Left ventricle myocardium inferior (tissue), 1 donor: ENCODE measurements at regions of chr12 and their contacts with region 1.

Region 1: GRCh38 chr12:71642264-71642663 is 21.4 kb downstream of the ZFC3H1 start:
- DNase-seq: no peak
- H3K4me3 ChIP-seq: no peak overlapping the region
- H3K27ac ChIP-seq: no peak overlapping the region
- H3K4me1 ChIP-seq: peaks cover 16% of the 10 kb centered on the region
- H3K27me3 ChIP-seq: no peaks in the 10 kb centered on the region
- CTCF ChIP-seq: no peak

Region 2: GRCh38 chr12:71109834-71110233 is 532.4 kb before region 1 on chr12:
- intact Hi-C with region 1: no loop called
- DNase-seq: no peak
- H3K4me3 ChIP-seq: no peak overlapping the region
- H3K27ac ChIP-seq: no peak overlapping the region
- H3K4me1 ChIP-seq: peaks cover 3% of the 10 kb centered on the region
- H3K27me3 ChIP-seq: no peaks in the 10 kb centered on the region
- CTCF ChIP-seq: no peak

Region 3: DNA sequence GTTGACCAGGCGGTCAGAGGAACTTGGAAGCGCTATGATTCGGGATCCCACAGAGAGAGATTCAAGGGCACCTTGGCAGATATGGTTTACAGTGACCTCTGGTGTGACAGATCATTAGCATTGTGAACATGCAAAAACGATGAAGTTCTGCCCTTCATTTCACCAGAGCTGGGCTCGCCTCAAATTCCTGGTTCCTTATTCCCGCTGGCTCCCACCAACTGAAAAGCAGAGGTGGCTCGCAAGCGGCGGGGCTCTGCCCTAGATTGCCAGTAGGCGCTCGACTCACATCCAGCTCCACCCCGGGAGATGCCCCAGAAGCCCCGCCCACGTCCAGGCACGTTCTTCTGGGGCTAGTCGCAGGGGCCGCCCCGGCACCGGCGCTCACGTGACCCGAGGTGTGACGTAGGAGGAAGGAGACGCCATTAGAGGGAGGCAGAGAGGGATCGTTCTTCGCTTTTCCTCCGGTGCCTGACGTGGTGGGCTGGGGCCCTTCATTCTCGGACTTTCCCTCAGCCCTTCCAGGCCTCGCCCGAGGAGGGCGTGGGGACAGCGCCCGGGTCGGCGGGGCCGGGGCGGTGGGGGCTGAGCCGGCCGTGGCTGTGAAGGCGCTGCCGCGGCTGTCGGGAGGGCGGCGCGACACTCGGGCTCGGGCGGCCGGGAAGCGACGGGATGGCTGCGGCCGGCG is 112.3 kb after region 1 on chr12 and contains the start of gene RAB21:
- intact Hi-C with region 1: loop called (anchors 10 kb)
- DNase-seq: peak; percentile 96
- H3K4me3 ChIP-seq: peak within 1 kb of the TSS; percentile 89
- H3K27ac ChIP-seq: peak within 1 kb of the TSS; percentile 94
- H3K4me1 ChIP-seq: peaks cover 52% of the 10 kb centered on the region
- H3K27me3 ChIP-seq: peaks cover 6% of the 10 kb centered on the region
- CTCF ChIP-seq: peak; percentile 49
- total RNA-seq, gene RAB21: 170 TPM